ENCODE measurements at regions of chr10 and their contacts with region 1.

Region 1: DNA sequence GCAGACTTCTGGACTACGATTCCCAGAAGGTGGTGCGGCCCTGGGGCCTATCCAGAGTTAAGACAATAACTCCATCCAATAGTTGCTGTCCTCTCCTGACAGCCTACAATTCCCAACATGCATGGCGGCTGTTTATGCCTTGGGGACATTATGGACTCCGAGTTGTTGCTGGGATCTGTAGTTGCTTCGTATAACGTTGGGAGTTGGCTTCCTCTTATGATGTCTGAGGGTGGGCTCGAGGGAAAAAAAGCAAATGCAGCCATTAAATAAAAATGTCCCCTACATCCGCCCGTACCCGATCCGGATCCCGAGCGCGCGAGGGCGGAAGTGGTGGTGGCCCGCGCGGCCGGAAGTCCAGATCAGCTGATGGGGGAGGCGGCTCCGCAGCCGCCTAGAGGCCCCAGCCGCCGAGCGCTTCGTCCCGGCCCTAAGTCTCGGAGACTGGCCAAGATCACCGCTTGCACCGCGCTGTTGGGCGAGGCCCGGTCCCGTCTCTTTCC is at the start of gene ZSWIM8:
- DNase-seq: peak; percentile 80 to 94
- ATAC-seq: peak; percentile 84 to 94 (median 84)
- H3K4me3 ChIP-seq: peak within 1 kb of the TSS; percentile 48
- H3K4me3 Mint-ChIP-seq: peak within 1 kb of the TSS; percentile 96
- H3K27ac ChIP-seq: peak within 1 kb of the TSS; percentile 69
- H3K27ac Mint-ChIP-seq: peak within 1 kb of the TSS; percentile 90 to 96
- H3K4me1 ChIP-seq: peaks cover 33% of the 10 kb centered on the region
- H3K4me1 Mint-ChIP-seq: peaks cover 51 to 60% of the 10 kb centered on the region in 2 donors
- H3K27me3 ChIP-seq: no peaks in the 10 kb centered on the region
- H3K27me3 Mint-ChIP-seq: no peaks in the 10 kb centered on the region
- CTCF ChIP-seq: no peak
- total RNA-seq, gene ZSWIM8: 157 to 161 (median 159) TPM

Region 2: DNA sequence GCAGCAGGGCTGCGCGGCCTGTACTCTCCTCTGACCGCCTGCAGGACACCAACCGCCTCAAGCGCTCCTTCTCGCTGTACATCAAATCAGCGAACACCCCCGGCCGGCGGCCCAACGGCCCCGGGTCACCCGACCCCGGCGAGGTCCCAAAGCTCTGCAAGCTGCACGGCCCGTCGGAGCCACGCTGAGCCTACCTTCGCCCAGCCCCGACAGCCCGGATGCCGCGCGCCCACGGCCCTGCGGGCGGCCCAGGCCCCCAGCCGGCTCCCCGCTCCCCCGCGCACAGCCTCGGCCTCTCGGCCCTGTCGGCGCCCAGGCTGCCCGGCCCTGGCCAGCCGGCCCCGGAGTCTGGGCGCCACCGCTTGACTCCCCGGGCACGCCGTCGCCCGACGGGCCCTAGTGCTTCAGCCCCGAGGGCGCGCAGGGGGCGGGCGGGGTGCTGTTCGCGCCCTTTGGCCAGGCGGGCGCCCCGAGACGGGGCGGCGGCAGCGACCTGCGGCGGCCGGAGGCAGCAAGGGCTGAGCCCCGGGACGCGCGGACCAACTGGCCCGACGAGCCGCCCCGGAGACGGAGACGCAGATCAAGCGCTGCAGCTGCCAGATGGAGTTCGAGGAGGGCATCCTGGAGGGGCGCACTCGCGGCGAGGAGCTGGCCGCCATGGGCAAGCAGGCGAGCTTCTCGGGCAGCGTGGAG is 52.2 kb before region 1 on chr10:
- intact Hi-C with region 1: no loop called
- DNase-seq: no peak
- ATAC-seq: no peak
- H3K4me3 ChIP-seq: no peak overlapping the region
- H3K4me3 Mint-ChIP-seq: no peak overlapping the region
- H3K27ac ChIP-seq: no peak overlapping the region
- H3K27ac Mint-ChIP-seq: no peak overlapping the region
- H3K4me1 ChIP-seq: peaks cover 14% of the 10 kb centered on the region
- H3K4me1 Mint-ChIP-seq: peaks cover 12 to 22% of the 10 kb centered on the region in 2 donors
- H3K27me3 ChIP-seq: no peaks in the 10 kb centered on the region
- H3K27me3 Mint-ChIP-seq: no peaks in the 10 kb centered on the region
- CTCF ChIP-seq: no peak

Region 3: DNA sequence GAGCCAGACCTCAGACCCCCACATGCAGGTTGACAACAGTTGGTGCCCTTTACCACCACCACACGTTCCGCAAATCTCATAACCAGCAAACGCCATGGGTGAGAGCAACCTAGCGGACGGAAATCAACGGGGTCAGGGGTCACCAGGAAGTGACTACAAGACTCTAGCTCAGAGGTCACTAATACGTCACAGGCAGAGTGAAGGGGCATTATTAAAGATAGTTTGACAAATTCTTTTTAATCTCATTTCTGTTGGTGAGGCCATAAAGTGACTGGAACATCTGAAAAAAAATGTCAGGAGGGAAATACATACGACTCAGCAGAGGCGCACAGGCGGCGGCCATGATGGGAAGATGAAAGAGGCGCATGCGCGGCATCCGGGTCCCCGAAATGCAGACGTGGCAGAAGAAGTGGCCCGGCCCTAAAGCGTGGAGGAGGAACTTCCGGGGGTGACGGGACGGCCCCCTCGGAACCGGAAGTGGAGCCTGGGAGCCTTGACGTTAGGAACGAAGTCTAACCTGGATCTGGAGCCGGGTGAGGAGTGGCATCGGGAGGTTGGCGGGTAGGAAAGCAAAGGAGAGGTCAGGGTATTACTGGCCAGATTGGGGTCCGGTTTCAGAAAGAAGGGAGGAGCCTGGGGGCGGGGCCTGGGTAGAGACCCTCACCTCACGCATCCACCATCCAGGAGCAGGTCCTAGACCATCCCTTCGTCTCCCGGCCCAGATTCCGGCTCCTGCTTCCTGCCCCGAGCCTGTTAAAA is 41.2 kb before region 1 on chr10 and contains the start of gene SEC24C:
- intact Hi-C with region 1: loop called (anchors 1 kb)
- DNase-seq: peak; percentile 95 to 99
- ATAC-seq: peak; percentile 88 to 95 (median 88)
- H3K4me3 ChIP-seq: peak within 1 kb of the TSS; percentile 73
- H3K4me3 Mint-ChIP-seq: peak within 1 kb of the TSS; percentile 100
- H3K27ac ChIP-seq: peak within 1 kb of the TSS; percentile 92
- H3K27ac Mint-ChIP-seq: peak within 1 kb of the TSS; percentile 98 to 99
- H3K4me1 ChIP-seq: peaks cover 27% of the 10 kb centered on the region
- H3K4me1 Mint-ChIP-seq: peaks cover 30 to 35% of the 10 kb centered on the region in 2 donors
- H3K27me3 ChIP-seq: no peaks in the 10 kb centered on the region
- H3K27me3 Mint-ChIP-seq: no peaks in the 10 kb centered on the region
- CTCF ChIP-seq: no peak
- total RNA-seq, gene SEC24C: 153 to 161 (median 160) TPM

Region 4: DNA sequence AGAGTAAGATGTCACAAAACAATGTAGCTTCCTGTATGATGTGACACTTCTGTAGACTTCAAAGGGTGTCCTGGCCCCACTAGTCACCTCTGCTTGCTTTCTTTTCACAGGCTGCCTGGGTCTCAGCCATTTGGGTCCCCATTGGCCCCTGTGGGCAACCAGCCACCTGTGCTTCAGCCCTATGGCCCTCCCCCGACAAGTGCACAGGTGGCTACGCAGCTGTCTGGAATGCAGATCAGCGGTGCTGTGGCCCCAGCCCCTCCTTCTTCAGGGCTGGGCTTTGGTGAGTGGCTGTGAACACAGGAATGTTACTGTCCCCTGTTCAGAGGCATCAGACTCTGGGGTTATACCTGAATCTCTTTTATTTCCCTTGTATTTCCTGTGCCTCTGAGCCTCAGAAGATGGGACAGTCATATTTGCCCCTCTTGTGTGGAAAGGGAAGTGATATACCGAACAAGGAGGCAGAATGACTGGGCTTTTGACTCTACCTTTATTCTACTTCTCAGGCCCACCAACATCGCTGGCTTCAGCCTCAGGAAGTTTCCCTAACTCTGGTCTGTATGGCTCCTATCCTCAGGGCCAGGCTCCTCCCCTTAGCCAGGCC is 25.7 kb before region 1 on chr10:
- intact Hi-C with region 1: loop called (anchors 1 kb)
- DNase-seq: peak; percentile 71 to 87
- ATAC-seq: peak; percentile 82 to 94 (median 89)
- H3K4me3 ChIP-seq: no peak overlapping the region
- H3K4me3 Mint-ChIP-seq: peak overlapping the region; percentile 75
- H3K27ac ChIP-seq: peak overlapping the region; percentile 90
- H3K27ac Mint-ChIP-seq: peak overlapping the region; percentile 93 to 96
- H3K4me1 ChIP-seq: peaks cover 53% of the 10 kb centered on the region
- H3K4me1 Mint-ChIP-seq: peaks cover 67 to 74% of the 10 kb centered on the region in 2 donors
- H3K27me3 ChIP-seq: no peaks in the 10 kb centered on the region
- H3K27me3 Mint-ChIP-seq: no peaks in the 10 kb centered on the region
- CTCF ChIP-seq: no peak

Region 5: GRCh38 chr10:73810735-73811465 is 25.6 kb after region 1 on chr10:
- intact Hi-C with region 1: loop called (anchors 1 kb)
- DNase-seq: peak in 1 of 2 donors; percentile 76
- ATAC-seq: peak; percentile 14 to 24 (median 22)
- H3K4me3 ChIP-seq: peak overlapping the region; percentile 57
- H3K4me3 Mint-ChIP-seq: peak overlapping the region; percentile 89
- H3K27ac ChIP-seq: peak overlapping the region; percentile 72
- H3K27ac Mint-ChIP-seq: peak overlapping the region; percentile 81 to 82
- H3K4me1 ChIP-seq: peaks cover 31% of the 10 kb centered on the region
- H3K4me1 Mint-ChIP-seq: peaks cover 31 to 34% of the 10 kb centered on the region in 2 donors
- H3K27me3 ChIP-seq: no peaks in the 10 kb centered on the region
- H3K27me3 Mint-ChIP-seq: no peaks in the 10 kb centered on the region
- CTCF ChIP-seq: no peak

Region 6: GRCh38 chr10:74176380-74177139 is 391.3 kb after region 1 on chr10:
- intact Hi-C with region 1: loop called (anchors 5 kb)
- DNase-seq: peak; percentile 92 to 98
- ATAC-seq: peak; percentile 92 to 99 (median 95)
- H3K4me3 ChIP-seq: peak overlapping the region; percentile 80
- H3K4me3 Mint-ChIP-seq: peak overlapping the region; percentile 97
- H3K27ac ChIP-seq: peak overlapping the region; percentile 84
- H3K27ac Mint-ChIP-seq: peak overlapping the region; percentile 91 to 95
- H3K4me1 ChIP-seq: peaks cover 14% of the 10 kb centered on the region
- H3K4me1 Mint-ChIP-seq: peaks cover 15 to 32% of the 10 kb centered on the region in 2 donors
- H3K27me3 ChIP-seq: no peaks in the 10 kb centered on the region
- H3K27me3 Mint-ChIP-seq: no peaks in the 10 kb centered on the region
- CTCF ChIP-seq: no peak